ENCODE measurements at regions of chr17 and their contacts with region 1.

Region 1: DNA sequence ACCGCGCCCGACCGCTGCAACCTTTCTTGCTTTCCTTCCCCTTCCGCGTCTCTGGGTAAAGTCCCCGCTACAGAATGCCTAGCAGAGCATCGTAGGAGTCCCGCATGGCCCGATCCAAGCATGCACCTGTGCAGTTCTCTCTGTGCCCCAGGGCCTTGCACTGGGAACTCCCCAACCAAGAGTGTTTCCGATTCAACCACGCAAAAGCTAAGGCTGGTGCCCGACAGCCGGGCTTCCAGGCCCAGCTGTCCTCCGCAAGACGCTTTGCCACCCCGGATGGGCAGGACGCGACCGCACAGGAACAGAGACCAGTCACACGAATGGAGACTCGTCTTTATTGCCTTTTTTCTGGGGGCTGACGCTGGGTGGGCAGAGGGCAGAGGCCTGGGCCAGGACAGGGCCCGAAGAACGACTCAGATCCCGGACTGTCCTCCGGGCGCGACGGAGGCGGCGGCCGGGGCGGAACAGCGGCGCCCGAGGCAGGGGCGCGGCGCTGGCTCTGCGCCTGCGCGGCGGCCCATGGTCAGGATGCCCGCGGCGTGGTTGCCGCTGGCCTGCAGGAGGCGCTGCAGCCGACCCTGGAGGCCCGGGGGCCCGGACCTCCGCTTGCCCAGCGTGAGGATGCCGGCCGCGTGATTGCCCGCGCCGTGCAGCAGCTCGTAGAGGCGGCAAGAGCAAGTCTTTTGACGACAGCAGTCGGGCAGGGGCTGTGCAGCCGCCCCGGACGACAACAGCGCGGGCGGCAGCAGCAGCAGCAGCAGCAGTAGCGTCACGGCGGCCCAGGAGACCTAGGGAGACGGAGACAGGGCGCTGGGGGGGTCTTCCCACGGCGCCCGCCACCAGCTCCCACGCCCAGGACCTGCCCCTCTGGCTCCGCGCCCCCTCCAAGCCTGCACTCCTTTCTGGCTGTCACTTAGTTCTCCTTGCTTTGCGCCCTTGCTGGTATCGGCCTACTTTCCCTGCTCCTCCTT is 1.2 kb downstream of the HCRT start:
- DNase-seq: peak; percentile 77
- H3K4me3 Mint-ChIP-seq: peak overlapping the region; percentile 86
- H3K27ac Mint-ChIP-seq: peak overlapping the region; percentile 70
- H3K4me1 Mint-ChIP-seq: peaks cover 45% of the 10 kb centered on the region
- H3K27me3 Mint-ChIP-seq: peaks cover 22% of the 10 kb centered on the region

Region 2: DNA sequence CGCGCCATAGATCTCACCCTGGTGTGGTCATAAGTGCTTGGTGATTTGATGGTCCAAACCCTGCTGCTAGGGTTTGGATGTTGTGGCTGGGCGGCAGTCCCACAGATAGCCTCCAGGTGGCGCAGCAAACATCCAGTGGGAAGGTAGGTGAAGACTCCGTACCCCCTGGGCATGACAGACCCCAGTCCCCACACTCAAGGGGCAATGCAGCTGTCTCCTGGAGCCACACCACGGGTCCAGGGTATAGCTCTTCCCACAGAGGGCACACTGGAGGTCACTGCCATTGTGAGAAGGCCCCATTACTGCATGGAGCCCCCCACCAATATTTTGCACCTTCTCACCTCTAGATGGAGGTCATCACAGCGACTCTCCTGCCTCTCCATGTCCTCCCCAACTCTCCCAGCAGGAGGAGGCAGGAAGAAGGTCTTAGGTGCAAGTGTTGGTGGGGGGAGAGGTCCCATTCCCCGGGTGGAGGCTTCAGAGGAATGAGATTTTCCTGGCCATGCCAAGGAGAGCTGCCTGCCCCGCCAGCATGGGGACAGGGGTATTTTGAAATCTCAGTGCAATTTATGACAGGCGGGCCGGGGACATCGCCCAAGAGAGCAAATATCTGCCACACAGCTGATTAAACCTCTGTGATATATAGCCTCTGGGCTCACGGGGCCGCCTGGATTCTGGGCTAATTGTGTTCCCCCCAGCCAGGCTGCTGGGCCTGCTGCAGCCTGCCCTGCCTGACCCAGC is 116.5 kb before region 1 on chr17:
- CTCF ChIA-PET with region 1: interaction called, 9 read pairs
- intact Hi-C with region 1: loop called (anchors 1 kb)
- DNase-seq: peak; percentile 83
- H3K4me3 Mint-ChIP-seq: no peak overlapping the region
- H3K27ac Mint-ChIP-seq: no peak overlapping the region
- H3K4me1 Mint-ChIP-seq: peaks cover 22% of the 10 kb centered on the region
- H3K27me3 Mint-ChIP-seq: peaks cover 15% of the 10 kb centered on the region

Region 3: DNA sequence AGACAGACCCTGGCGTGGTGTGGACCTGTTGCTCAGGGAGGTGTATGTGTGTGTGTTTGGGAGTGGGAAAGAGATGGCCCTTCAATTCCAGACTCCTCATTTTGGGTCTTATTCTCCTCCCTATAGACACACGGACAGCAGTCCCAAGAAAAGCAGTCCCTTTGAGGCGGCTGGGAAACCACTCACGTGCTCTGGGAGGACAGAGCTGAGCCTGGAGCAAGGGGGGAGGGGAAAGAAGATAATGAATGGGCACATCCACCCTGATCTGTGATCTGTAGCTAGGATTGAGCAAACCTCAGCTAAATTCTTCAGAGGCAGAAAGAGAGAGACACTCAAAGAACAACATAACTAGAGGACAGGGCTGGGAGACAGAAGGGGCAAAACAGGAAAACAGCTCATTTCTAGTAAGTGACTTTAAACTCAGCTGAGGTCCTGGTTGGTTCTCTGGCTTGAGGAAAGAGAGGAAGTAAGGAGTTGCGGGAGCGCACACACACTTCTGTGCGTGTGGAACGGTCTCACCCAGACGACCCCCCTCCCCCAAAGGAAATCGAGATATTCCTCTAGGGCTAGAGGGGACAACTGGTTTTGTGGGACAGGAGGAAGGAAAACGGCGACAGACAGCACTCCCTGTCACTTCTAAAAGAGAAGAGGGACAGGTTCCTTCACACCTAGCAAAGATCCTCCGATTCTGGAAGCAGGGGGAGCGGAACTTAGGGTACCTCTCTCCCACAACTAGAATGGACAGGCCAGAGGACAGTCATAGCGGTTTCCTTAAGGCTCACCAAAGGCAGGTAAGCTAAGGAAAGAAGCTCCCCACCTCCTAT is 29.9 kb before region 1 on chr17:
- CTCF ChIA-PET with region 1: interaction called, 4 read pairs
- intact Hi-C with region 1: loop called (anchors 1 kb)
- DNase-seq: no peak
- H3K4me3 Mint-ChIP-seq: peak overlapping the region; percentile 83
- H3K27ac Mint-ChIP-seq: peak overlapping the region; percentile 87
- H3K4me1 Mint-ChIP-seq: peaks cover 39% of the 10 kb centered on the region
- H3K27me3 Mint-ChIP-seq: no peaks in the 10 kb centered on the region

Region 4: GRCh38 chr17:42248351-42249179 is 64.5 kb after region 1 on chr17:
- CTCF ChIA-PET with region 1: interaction called, 4 read pairs
- intact Hi-C with region 1: loop called (anchors 1 kb)
- DNase-seq: peak; percentile 92
- H3K4me3 Mint-ChIP-seq: peak overlapping the region; percentile 74
- H3K27ac Mint-ChIP-seq: peak overlapping the region; percentile 97
- H3K4me1 Mint-ChIP-seq: peaks cover 71% of the 10 kb centered on the region
- H3K27me3 Mint-ChIP-seq: no peaks in the 10 kb centered on the region

Region 5: DNA sequence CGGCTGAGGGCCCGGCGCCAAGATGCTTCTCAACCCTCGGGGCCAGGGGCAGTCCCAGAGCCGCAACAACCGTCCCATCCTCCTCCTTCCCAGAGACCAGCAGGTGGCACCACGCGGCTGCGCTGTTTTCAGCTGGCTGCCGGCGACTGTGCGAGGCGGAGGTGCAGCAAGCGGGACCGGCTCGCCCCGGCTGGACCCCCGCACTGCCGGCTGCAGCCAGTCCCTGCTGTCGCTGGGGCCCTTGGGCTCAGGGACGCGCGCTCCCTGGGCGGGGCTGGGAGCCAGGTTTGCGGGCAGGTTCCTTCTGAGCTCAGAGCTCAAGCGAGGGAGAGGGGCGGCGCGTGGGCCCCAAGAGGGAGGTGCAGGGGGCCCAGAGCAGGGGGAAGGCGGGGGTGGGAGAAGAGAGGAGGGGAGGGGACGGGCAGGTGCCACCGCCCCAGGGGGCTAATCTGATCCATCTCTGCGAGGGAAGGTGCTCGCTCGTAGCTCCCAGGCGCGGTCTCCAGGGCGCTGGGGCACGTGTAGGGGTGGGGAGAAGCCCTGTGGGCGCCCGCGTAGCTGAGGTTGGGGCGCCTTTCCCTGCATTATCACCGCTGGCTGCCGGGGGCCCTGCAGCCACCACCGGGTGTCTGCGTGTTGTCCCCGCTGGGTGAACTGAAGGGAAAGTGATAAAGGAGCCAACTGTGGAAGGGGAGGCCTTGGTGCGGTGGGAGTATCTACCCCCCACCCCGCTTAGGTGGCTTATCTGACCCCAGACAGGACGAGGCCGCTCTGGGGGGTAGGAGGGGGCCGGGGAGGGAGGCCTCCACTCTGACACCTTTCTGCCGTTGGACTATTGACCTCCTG is 128.5 kb after region 1 on chr17:
- CTCF ChIA-PET with region 1: interaction called, 4 read pairs
- intact Hi-C with region 1: loop called (anchors 5 kb)
- DNase-seq: peak; percentile 95
- H3K4me3 Mint-ChIP-seq: peak overlapping the region; percentile 44
- H3K27ac Mint-ChIP-seq: peak overlapping the region; percentile 92
- H3K4me1 Mint-ChIP-seq: peaks cover 86% of the 10 kb centered on the region
- H3K27me3 Mint-ChIP-seq: no peaks in the 10 kb centered on the region

Region 6: GRCh38 chr17:42527273-42527703 is 343.3 kb after region 1 on chr17:
- CTCF ChIA-PET with region 1: no interaction called
- intact Hi-C with region 1: loop called (anchors 5 kb)
- DNase-seq: peak; percentile 86
- H3K4me3 Mint-ChIP-seq: no peak overlapping the region
- H3K27ac Mint-ChIP-seq: no peak overlapping the region
- H3K4me1 Mint-ChIP-seq: peaks cover 32% of the 10 kb centered on the region
- H3K27me3 Mint-ChIP-seq: no peaks in the 10 kb centered on the region

Measured in activated naive CD4-positive, alpha-beta T cell treated with anti-CD3 and anti-CD28 coated beads for 36 hours (primary cell).